SK-N-SH (cell line): ENCODE measurements at regions of chr2 and their contacts with region 1.

Region 1: DNA sequence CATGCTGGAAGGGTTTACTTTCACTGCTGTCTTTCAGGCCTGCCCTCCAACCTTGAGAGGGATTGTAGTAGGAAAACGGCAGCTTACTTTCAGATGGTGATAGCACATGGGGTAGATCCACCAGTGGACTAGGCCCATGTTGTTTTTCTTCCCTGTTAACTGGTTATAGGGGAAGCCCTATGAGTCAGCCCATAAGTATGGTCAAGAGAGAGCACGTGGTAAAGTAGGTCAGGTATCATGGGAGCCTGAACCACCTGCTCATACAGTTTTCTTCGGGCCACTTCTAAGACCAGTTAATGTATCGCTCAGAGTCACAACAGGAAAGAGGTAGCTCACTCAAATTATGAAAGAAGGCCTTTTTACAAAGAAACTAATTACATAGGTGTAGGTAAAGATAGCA is 33.0 kb downstream of the PDK1 start:
- DNase-seq: no peak
- H3K4me3 ChIP-seq: no peak overlapping the region
- H3K27ac ChIP-seq: no peak overlapping the region
- H3K4me1 ChIP-seq: peaks cover 0 to 2% of the 10 kb centered on the region in 2 experiments; a peak in 1 of 4 replicates
- H3K27me3 ChIP-seq: no peaks in the 10 kb centered on the region
- CTCF ChIP-seq: no peak
- EP300 ChIP-seq: no peak
- RAD21 ChIP-seq: no peak

Region 2: GRCh38 chr2:172496160-172496608 is 92.7 kb before region 1 on chr2:
- CTCF ChIA-PET with region 1: no interaction called
- POLR2A ChIA-PET with region 1: no interaction called
- DNase-seq: no peak
- H3K4me3 ChIP-seq: no peak overlapping the region
- H3K27ac ChIP-seq: no peak overlapping the region
- H3K4me1 ChIP-seq: no peaks in the 10 kb centered on the region
- H3K27me3 ChIP-seq: no peaks in the 10 kb centered on the region
- CTCF ChIP-seq: no peak
- EP300 ChIP-seq: no peak
- RAD21 ChIP-seq: no peak

Region 3: DNA sequence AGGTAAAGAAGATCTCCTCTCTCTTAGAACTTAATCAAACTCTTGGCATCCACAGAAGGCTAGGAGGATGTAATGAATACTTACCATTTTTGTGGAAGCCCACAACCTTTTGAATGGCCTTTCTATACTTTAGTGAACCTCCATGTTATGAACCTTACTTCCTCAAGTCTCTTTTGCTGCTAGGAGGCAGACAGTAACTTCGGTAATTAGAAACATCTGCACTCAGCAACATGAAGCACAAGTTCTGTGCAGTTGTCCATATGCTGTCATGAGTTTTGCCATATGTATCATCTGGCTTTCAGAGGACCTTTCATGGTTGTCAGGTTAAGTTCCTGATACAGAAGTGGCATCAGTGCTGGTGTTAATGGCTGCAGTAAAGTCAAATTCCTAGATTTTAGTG is 17.4 kb after region 1 on chr2:
- CTCF ChIA-PET with region 1: interaction called, 26 read pairs
- POLR2A ChIA-PET with region 1: no interaction called
- DNase-seq: no peak
- H3K4me3 ChIP-seq: no peak overlapping the region
- H3K27ac ChIP-seq: peak overlapping the region in 1 of 2 experiments; percentile 47; a peak in 1 of 4 replicates
- H3K4me1 ChIP-seq: peaks cover 0 to 5% of the 10 kb centered on the region in 2 experiments; a peak in 2 of 4 replicates
- H3K27me3 ChIP-seq: no peaks in the 10 kb centered on the region
- CTCF ChIP-seq: no peak
- EP300 ChIP-seq: no peak
- RAD21 ChIP-seq: no peak

Region 4: GRCh38 chr2:172613040-172613439 is 24.1 kb after region 1 on chr2:
- CTCF ChIA-PET with region 1: interaction called, 26 read pairs
- POLR2A ChIA-PET with region 1: no interaction called
- DNase-seq: peak; percentile 32
- H3K4me3 ChIP-seq: no peak overlapping the region
- H3K27ac ChIP-seq: no peak overlapping the region; a peak in 1 of 4 replicates
- H3K4me1 ChIP-seq: peaks cover 0 to 13% of the 10 kb centered on the region in 2 experiments; a peak in 2 of 4 replicates
- H3K27me3 ChIP-seq: no peaks in the 10 kb centered on the region
- CTCF ChIP-seq: no peak
- EP300 ChIP-seq: no peak
- RAD21 ChIP-seq: no peak